GM12878 (cell line): ENCODE measurements at regions of chr17 and their contacts with region 1.

Region 1: DNA sequence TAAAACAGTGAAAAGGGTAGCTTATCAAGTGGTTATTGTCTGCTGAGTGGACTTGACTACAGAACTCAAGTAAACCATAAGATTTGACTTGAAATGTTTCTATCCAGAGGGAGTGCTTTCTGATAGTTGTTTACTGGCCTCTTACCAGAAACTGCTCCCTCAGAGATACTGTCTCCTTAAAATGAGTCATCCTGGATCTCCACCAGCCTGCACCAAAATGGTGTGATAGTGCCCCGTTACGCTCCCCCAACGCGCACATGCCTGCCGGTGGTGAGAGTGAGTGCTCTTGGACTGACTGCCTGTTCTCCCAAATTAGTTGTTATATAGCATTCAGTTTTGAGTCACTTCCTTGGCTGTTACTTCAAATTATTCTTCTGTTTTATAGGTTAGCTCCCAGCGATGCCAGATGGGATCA is 22.9 kb downstream of the PRCD start:
- DNase-seq: no peak
- ATAC-seq: peak; percentile 9; the same call in 2 of the 3 replicates
- H3K4me3 ChIP-seq: 0 out of 2 replicates have a peak overlapping the region, but pooled peaks have one; percentile 1
- H3K27ac ChIP-seq: peak overlapping the region; percentile 33; the same call in 1 of the 2 replicates
- H3K4me1 ChIP-seq: peaks cover 23% of the 10 kb centered on the region
- H3K27me3 ChIP-seq: no peaks in the 10 kb centered on the region
- CTCF ChIP-seq: no peak
- EP300 ChIP-seq: no peak
- POLR2A ChIP-seq: no peak
- RAD21 ChIP-seq: no peak

Region 2: GRCh38 chr17:76696763-76697701 is 134.3 kb after region 1 on chr17:
- CTCF ChIA-PET with region 1: interaction called, 3 read pairs
- POLR2A ChIA-PET with region 1: interaction called, 5 read pairs
- RAD21 ChIA-PET with region 1: no interaction called
- SMC1A ChIA-PET with region 1: no interaction called
- in situ Hi-C with region 1: no loop called
- intact Hi-C with region 1: loop called (anchors 10 kb)
- DNase-seq: peak; percentile 40
- ATAC-seq: peak; percentile 92
- H3K4me3 ChIP-seq: no peak overlapping the region
- H3K27ac ChIP-seq: no peak overlapping the region
- H3K4me1 ChIP-seq: peaks cover 22% of the 10 kb centered on the region
- H3K27me3 ChIP-seq: no peaks in the 10 kb centered on the region; a peak in 1 of 4 replicates
- CTCF ChIP-seq: no peak
- EP300 ChIP-seq: no peak
- POLR2A ChIP-seq: no peak
- RAD21 ChIP-seq: no peak